Activated T-helper 2 cell treated with anti-CD3 and anti-CD28 coated beads, Interferon-gamma antibody, Interleukin-2, Interleukin-4, amounts not matched to agents 10 μg/mL and 5 μg/mL and 100 μg/mL, durations not matched to agents 14 hours and 24 hours and 36 hours (primary cell): ENCODE measurements at regions of chr11 and their contacts with region 1.

Region 1: GRCh38 chr11:124114942-124115781 is at the start of gene VWA5A:
- DNase-seq: peak; percentile 66
- H3K4me3 Mint-ChIP-seq: peak within 1 kb of the TSS; percentile 86
- H3K27ac Mint-ChIP-seq: peak within 1 kb of the TSS; percentile 67
- H3K4me1 Mint-ChIP-seq: peaks cover 26% of the 10 kb centered on the region
- H3K27me3 Mint-ChIP-seq: peaks cover 19% of the 10 kb centered on the region
- total RNA-seq, gene VWA5A: 4.6 TPM in 2 replicates

Region 2: GRCh38 chr11:124238512-124238911 is 123.3 kb after region 1 on chr11:
- intact Hi-C with region 1: no loop called
- DNase-seq: no peak
- H3K4me3 Mint-ChIP-seq: no peak overlapping the region
- H3K27ac Mint-ChIP-seq: no peak overlapping the region
- H3K4me1 Mint-ChIP-seq: no peaks in the 10 kb centered on the region
- H3K27me3 Mint-ChIP-seq: no peaks in the 10 kb centered on the region

Region 3: GRCh38 chr11:124277804-124278203 is 162.6 kb after region 1 on chr11:
- intact Hi-C with region 1: loop called (anchors 1 kb)
- DNase-seq: no peak
- H3K4me3 Mint-ChIP-seq: no peak overlapping the region
- H3K27ac Mint-ChIP-seq: no peak overlapping the region
- H3K4me1 Mint-ChIP-seq: peaks cover 16% of the 10 kb centered on the region
- H3K27me3 Mint-ChIP-seq: peaks cover 28% of the 10 kb centered on the region